ENCODE measurements at regions of chr7 and their contacts with region 1.

Region 1: DNA sequence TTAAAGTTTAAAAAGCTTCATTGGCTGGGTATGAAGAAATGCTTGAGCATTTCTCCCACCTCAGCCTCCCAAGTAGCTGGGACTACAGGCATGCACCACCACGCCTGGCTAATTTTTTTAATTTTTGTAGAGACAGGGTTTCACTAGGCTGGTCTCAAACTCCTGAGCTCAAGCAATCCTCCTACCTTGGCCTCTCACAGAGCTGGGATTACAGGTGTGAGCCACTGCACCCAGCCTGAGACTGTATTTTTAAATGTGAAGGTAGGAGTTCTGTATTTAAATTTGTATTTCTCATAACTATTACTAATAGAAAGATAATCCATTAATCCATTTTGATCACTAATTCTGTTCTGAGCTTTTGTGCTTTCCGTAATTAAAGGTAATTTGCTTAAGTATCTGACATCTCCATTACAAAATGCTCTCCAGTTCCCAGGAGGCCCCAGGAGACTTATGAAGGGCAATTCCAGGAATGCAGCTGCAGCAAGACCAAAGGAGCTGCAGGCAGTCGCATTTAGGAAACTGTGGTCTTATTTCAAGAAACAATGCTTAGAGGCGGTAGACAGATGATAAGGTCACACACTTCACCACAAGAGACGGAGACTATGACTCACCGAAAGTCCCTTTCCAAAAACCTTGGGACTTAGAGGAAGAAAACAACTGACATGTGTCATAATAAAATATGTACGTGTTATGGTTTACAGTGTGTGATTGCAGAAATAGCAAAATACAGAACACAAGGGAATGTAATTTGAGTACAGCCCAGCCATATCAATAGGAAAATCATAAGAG is 23.3 kb downstream of the YAE1 start:
- DNase-seq: peak; percentile 84
- ATAC-seq: peak; percentile 85
- H3K4me3 Mint-ChIP-seq: peak overlapping the region; percentile 30
- H3K27ac Mint-ChIP-seq: peak overlapping the region; percentile 43
- H3K4me1 Mint-ChIP-seq: peaks cover 36% of the 10 kb centered on the region
- H3K27me3 Mint-ChIP-seq: no peaks in the 10 kb centered on the region

Region 2: DNA sequence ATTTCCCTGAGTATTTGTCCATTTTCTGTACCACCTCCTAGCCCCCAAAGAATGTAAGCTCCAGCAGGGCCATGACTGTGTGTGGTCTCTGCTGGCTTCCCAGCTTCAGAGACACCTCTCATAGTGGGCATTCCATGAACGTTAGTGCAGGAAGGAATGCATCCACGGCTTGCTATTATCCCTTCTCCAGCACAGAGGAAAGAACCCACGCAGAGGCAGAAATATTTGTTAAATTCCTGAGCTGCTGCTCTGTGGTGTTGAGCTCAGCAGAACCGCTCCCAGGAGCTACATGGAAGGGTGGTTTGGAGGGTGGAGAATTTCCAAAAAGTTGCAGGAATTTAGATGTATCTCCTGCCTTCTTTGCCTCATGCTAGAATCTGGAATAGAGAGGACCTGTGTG is 336.6 kb before region 1 on chr7:
- CTCF ChIA-PET with region 1: no interaction called
- POLR2A ChIA-PET with region 1: no interaction called
- intact Hi-C with region 1: no loop called
- DNase-seq: no peak
- ATAC-seq: no peak
- H3K4me3 Mint-ChIP-seq: no peak overlapping the region
- H3K27ac Mint-ChIP-seq: no peak overlapping the region
- H3K4me1 Mint-ChIP-seq: no peaks in the 10 kb centered on the region
- H3K27me3 Mint-ChIP-seq: peaks cover 3% of the 10 kb centered on the region

Region 3: GRCh38 chr7:39566023-39566921 is 23.2 kb before region 1 on chr7 and contains the start of gene YAE1:
- CTCF ChIA-PET with region 1: interaction called, 3 read pairs
- POLR2A ChIA-PET with region 1: no interaction called
- intact Hi-C with region 1: loop called in 1 of 2 experiments (anchors 1 kb)
- DNase-seq: peak; percentile 89
- ATAC-seq: peak; percentile 95
- H3K4me3 Mint-ChIP-seq: peak within 1 kb of the TSS; percentile 96
- H3K27ac Mint-ChIP-seq: peak within 1 kb of the TSS; percentile 98
- H3K4me1 Mint-ChIP-seq: peaks cover 14% of the 10 kb centered on the region
- H3K27me3 Mint-ChIP-seq: no peaks in the 10 kb centered on the region
- total RNA-seq, gene YAE1: 9.8 to 13.5 TPM

Region 4: GRCh38 chr7:39609113-39609934 is 19.8 kb after region 1 on chr7:
- CTCF ChIA-PET with region 1: interaction called, 7 read pairs
- POLR2A ChIA-PET with region 1: no interaction called
- intact Hi-C with region 1: loop called in 1 of 2 experiments (anchors 2 kb)
- DNase-seq: peak; percentile 42
- ATAC-seq: peak; percentile 66
- H3K4me3 Mint-ChIP-seq: peak overlapping the region; percentile 41
- H3K27ac Mint-ChIP-seq: peak overlapping the region; percentile 70
- H3K4me1 Mint-ChIP-seq: peaks cover 45% of the 10 kb centered on the region
- H3K27me3 Mint-ChIP-seq: peaks cover 17% of the 10 kb centered on the region

Region 5: GRCh38 chr7:39664057-39664456 is 74.5 kb after region 1 on chr7:
- CTCF ChIA-PET with region 1: no interaction called
- POLR2A ChIA-PET with region 1: no interaction called
- intact Hi-C with region 1: no loop called
- DNase-seq: no peak
- ATAC-seq: no peak
- H3K4me3 Mint-ChIP-seq: no peak overlapping the region
- H3K27ac Mint-ChIP-seq: no peak overlapping the region
- H3K4me1 Mint-ChIP-seq: peaks cover 37% of the 10 kb centered on the region
- H3K27me3 Mint-ChIP-seq: no peaks in the 10 kb centered on the region

Region 6: DNA sequence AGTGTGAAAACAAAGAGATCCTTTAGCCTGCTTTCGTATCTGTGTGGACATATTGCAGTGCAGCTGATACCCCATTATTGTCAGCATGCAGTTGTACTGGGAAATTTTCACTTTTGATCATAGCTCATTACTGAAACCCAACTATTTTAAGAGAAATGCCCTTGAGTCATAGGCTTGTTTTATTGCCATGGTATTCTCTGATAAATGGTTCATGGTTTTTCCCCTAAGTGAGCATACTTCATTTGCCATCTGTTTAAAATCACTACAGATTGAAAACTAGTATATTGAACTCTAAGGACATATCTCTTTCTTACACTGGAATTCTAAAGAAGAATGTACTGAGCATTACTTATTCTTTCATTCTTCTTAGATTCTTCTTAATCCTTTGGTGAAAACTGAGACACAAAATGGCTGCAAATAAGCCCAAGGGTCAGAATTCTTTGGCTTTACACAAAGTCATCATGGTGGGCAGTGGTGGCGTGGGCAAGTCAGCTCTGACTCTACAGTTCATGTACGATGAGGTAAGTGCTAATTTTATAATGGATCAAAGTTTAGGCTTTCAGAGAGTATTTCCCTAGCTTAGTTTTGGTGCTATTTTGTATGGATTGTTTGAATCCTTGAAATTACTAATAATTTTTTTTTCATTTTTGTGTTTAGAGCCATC is 96.9 kb after region 1 on chr7:
- CTCF ChIA-PET with region 1: interaction called, 5 read pairs
- POLR2A ChIA-PET with region 1: no interaction called
- intact Hi-C with region 1: loop called (anchors 1 to 2 kb)
- DNase-seq: peak; percentile 23
- ATAC-seq: peak; percentile 83
- H3K4me3 Mint-ChIP-seq: no peak overlapping the region
- H3K27ac Mint-ChIP-seq: peak overlapping the region; percentile 47
- H3K4me1 Mint-ChIP-seq: peaks cover 55% of the 10 kb centered on the region
- H3K27me3 Mint-ChIP-seq: no peaks in the 10 kb centered on the region

Measured in activated CD4-positive, alpha-beta T cell treated with anti-CD3 and anti-CD28 coated beads for 36 hours (primary cell).